Activated CD8-positive, alpha-beta T cell treated with anti-CD3 and anti-CD28 coated beads, Interleukin-2, amount 10 ng/mL, durations not matched to agents 7 days and 5 days (primary cell): ENCODE measurements at regions of chr5 and their contacts with region 1.

Region 1: GRCh38 chr5:33936004-33936380 is 194 bp upstream of the RXFP3 start:
- DNase-seq: peak; percentile 65
- ATAC-seq: peak; percentile 82
- H3K4me3 Mint-ChIP-seq: no peak overlapping the region
- H3K27ac Mint-ChIP-seq: no peak overlapping the region
- H3K4me1 Mint-ChIP-seq: no peaks in the 10 kb centered on the region
- H3K27me3 Mint-ChIP-seq: peaks cover 53% of the 10 kb centered on the region

Region 2: GRCh38 chr5:33440482-33441240 is 495.3 kb before region 1 on chr5 and contains the start of gene TARS1:
- CTCF ChIA-PET with region 1: interaction called, 31 read pairs
- POLR2A ChIA-PET with region 1: no interaction called
- DNase-seq: peak; percentile 97
- ATAC-seq: peak; percentile 98
- H3K4me3 Mint-ChIP-seq: no peak within 1 kb of the TSS
- H3K27ac Mint-ChIP-seq: no peak within 1 kb of the TSS
- H3K4me1 Mint-ChIP-seq: peaks cover 34% of the 10 kb centered on the region
- H3K27me3 Mint-ChIP-seq: no peaks in the 10 kb centered on the region
- total RNA-seq, gene TARS1: 180 to 189 TPM

Region 3: DNA sequence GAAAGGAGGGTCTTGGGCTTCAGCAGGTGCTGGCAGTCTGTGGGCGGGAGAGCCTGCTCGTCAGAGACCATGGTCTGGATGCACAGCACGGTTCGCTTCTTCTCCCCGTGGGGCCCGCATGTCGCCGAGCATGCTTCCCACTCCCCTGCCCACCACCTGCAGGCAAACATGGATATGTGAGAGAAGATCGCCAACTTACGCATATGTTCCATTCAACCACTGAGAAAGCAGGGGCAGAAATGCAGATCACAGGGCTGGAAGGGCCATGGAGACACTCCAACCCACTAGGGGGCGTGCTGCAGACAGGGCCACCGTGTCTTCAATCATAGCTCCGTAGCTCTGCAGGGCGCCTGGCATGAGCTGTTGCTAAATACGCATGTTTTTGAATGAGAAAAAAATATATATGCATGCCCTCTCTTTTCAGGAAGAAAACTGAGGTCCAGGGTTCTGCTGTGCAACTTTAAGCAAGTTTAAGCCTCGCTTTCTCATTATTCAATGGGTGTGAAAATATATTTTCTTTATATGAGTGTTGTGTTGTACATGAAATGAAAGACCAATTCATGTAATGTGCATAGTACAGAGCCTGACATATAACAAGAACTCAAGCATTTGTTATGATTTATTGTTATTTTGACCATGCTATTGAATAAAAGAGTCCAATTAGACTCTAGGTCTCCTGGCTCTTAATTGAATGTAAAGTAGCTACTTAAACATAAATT is 347.2 kb before region 1 on chr5:
- CTCF ChIA-PET with region 1: interaction called, 31 read pairs
- POLR2A ChIA-PET with region 1: no interaction called
- DNase-seq: peak; percentile 50
- ATAC-seq: peak; percentile 44
- H3K4me3 Mint-ChIP-seq: no peak overlapping the region
- H3K27ac Mint-ChIP-seq: no peak overlapping the region
- H3K4me1 Mint-ChIP-seq: no peaks in the 10 kb centered on the region
- H3K27me3 Mint-ChIP-seq: peaks cover 3% of the 10 kb centered on the region

Region 4: GRCh38 chr5:33840927-33841547 is 95.0 kb before region 1 on chr5:
- CTCF ChIA-PET with region 1: interaction called, 12 read pairs
- POLR2A ChIA-PET with region 1: no interaction called
- DNase-seq: peak; percentile 56
- ATAC-seq: peak; percentile 88
- H3K4me3 Mint-ChIP-seq: peak overlapping the region; percentile 27
- H3K27ac Mint-ChIP-seq: peak overlapping the region; percentile 73
- H3K4me1 Mint-ChIP-seq: peaks cover 43% of the 10 kb centered on the region
- H3K27me3 Mint-ChIP-seq: peaks cover 14% of the 10 kb centered on the region